ENCODE measurements at regions of chr7 and their contacts with region 1.

Region 1: GRCh38 chr7:140607441-140607989 is 33.1 kb downstream of the DENND2A start:
- DNase-seq: peak; percentile 91
- ATAC-seq: peak; percentile 30
- H3K4me3 ChIP-seq: no peak overlapping the region
- H3K27ac ChIP-seq: peak overlapping the region; percentile 80
- H3K4me1 ChIP-seq: peaks cover 34% of the 10 kb centered on the region
- H3K27me3 ChIP-seq: no peaks in the 10 kb centered on the region
- CTCF ChIP-seq: no peak
- POLR2A ChIP-seq: no peak
- RAD21 ChIP-seq: 0 out of 2 replicates have a peak, but pooled peaks have one; percentile 14

Region 2: GRCh38 chr7:139855498-139856270 is 751.8 kb before region 1 on chr7:
- CTCF ChIA-PET with region 1: no interaction called
- POLR2A ChIA-PET with region 1: no interaction called
- dilution Hi-C with region 1: no loop called
- in situ Hi-C with region 1: no loop called
- intact Hi-C with region 1: no loop called
- DNase-seq: no peak
- ATAC-seq: no peak
- H3K4me3 ChIP-seq: no peak overlapping the region
- H3K27ac ChIP-seq: peak overlapping the region; percentile 52; the same call in 1 of the 2 replicates
- H3K4me1 ChIP-seq: peaks cover 13% of the 10 kb centered on the region
- H3K27me3 ChIP-seq: no peaks in the 10 kb centered on the region
- CTCF ChIP-seq: no peak
- POLR2A ChIP-seq: no peak
- RAD21 ChIP-seq: no peak

Region 3: GRCh38 chr7:140564643-140565042 is 42.9 kb before region 1 on chr7:
- CTCF ChIA-PET with region 1: no interaction called
- POLR2A ChIA-PET with region 1: no interaction called
- dilution Hi-C with region 1: no loop called
- in situ Hi-C with region 1: no loop called
- intact Hi-C with region 1: loop called (anchors 2 kb)
- DNase-seq: no peak
- ATAC-seq: no peak
- H3K4me3 ChIP-seq: no peak overlapping the region
- H3K27ac ChIP-seq: no peak overlapping the region
- H3K4me1 ChIP-seq: peaks cover 14% of the 10 kb centered on the region
- H3K27me3 ChIP-seq: no peaks in the 10 kb centered on the region
- CTCF ChIP-seq: no peak
- POLR2A ChIP-seq: no peak
- RAD21 ChIP-seq: no peak

Region 4: DNA sequence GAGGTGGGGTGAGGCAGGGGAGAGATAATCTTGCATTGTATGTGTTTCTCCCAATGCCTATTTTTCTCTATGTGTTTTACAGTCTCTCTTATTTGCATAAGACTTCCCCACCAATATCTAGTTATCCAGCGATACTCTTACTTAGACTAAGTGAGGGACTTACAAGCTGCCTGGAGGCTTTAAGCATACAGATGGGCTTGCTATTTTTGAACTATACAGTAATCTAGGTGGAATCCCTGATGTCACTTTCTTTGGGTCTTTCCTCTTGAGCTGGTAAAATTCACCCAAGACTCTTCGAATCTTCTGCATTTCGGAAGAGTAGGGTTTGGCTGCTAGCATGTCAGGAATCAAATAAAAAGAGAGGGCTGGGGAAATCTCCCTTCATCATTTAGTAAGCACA is 165.6 kb after region 1 on chr7:
- CTCF ChIA-PET with region 1: no interaction called
- POLR2A ChIA-PET with region 1: no interaction called
- dilution Hi-C with region 1: no loop called
- in situ Hi-C with region 1: no loop called
- intact Hi-C with region 1: no loop called
- DNase-seq: peak; percentile 29
- ATAC-seq: no peak
- H3K4me3 ChIP-seq: no peak overlapping the region
- H3K27ac ChIP-seq: no peak overlapping the region
- H3K4me1 ChIP-seq: no peaks in the 10 kb centered on the region
- H3K27me3 ChIP-seq: no peaks in the 10 kb centered on the region
- CTCF ChIP-seq: no peak
- POLR2A ChIP-seq: no peak
- RAD21 ChIP-seq: no peak

Region 5: DNA sequence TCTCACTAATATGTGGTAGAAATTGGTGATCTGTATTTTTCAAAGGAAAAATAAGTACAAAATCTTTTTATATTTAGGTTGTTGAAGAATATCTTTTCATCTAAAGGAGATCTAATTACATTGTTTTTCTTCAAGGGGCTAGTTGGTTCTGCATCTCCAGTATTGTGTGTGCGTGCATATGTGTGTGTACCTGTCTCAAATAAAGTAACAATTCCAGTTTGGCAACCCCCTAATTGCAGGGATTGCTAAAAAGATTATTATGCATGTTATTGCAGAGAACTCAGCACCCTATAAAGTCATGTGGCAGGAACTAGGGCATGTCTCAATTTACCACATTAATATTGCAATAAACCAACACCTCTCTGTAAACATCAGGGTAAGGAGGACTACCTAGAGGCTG is 370.2 kb after region 1 on chr7:
- CTCF ChIA-PET with region 1: no interaction called
- POLR2A ChIA-PET with region 1: no interaction called
- dilution Hi-C with region 1: no loop called
- in situ Hi-C with region 1: no loop called
- intact Hi-C with region 1: no loop called
- DNase-seq: no peak
- ATAC-seq: no peak
- H3K4me3 ChIP-seq: no peak overlapping the region
- H3K27ac ChIP-seq: no peak overlapping the region
- H3K4me1 ChIP-seq: no peaks in the 10 kb centered on the region
- H3K27me3 ChIP-seq: no peaks in the 10 kb centered on the region
- CTCF ChIP-seq: no peak
- POLR2A ChIP-seq: no peak
- RAD21 ChIP-seq: no peak

Region 6: GRCh38 chr7:140990193-140990962 is 382.9 kb after region 1 on chr7:
- CTCF ChIA-PET with region 1: no interaction called
- POLR2A ChIA-PET with region 1: no interaction called
- dilution Hi-C with region 1: no loop called
- in situ Hi-C with region 1: no loop called
- intact Hi-C with region 1: no loop called
- DNase-seq: no peak
- ATAC-seq: no peak
- H3K4me3 ChIP-seq: no peak overlapping the region
- H3K27ac ChIP-seq: no peak overlapping the region
- H3K4me1 ChIP-seq: no peaks in the 10 kb centered on the region
- H3K27me3 ChIP-seq: no peaks in the 10 kb centered on the region; the same call in 1 of the 2 replicates
- CTCF ChIP-seq: no peak
- POLR2A ChIP-seq: no peak
- RAD21 ChIP-seq: no peak

Measured in IMR-90 (cell line).